CD4-positive, alpha-beta T cell (primary cell): ENCODE measurements at regions of chr20 and their contacts with region 1.

Region 1: GRCh38 chr20:17536944-17537444 is 5.8 kb upstream of the BFSP1 start:
- DNase-seq: peak; percentile 25 to 83 (median 52)
- ATAC-seq: peak; percentile 98
- H3K4me3 ChIP-seq: no peak overlapping the region
- H3K4me3 Mint-ChIP-seq: no peak overlapping the region
- H3K27ac ChIP-seq: no peak overlapping the region
- H3K27ac Mint-ChIP-seq: no peak overlapping the region
- H3K4me1 ChIP-seq: peaks cover 6% of the 10 kb centered on the region
- H3K4me1 Mint-ChIP-seq: no peaks in the 10 kb centered on the region
- H3K27me3 ChIP-seq: no peaks in the 10 kb centered on the region
- H3K27me3 Mint-ChIP-seq: peaks cover 35% of the 10 kb centered on the region
- CTCF ChIP-seq: peak; percentile 77

Region 2: GRCh38 chr20:17504898-17505635 is 31.9 kb before region 1 on chr20:
- CTCF ChIA-PET with region 1: interaction called, 18 read pairs
- POLR2A ChIA-PET with region 1: no interaction called
- intact Hi-C with region 1: loop called in 1 of 2 experiments (anchors 1 kb)
- DNase-seq: peak in 13 of 14 experiments; percentile 8 to 80 (median 25)
- ATAC-seq: peak; percentile 80
- H3K4me3 ChIP-seq: peak overlapping the region; percentile 69
- H3K4me3 Mint-ChIP-seq: peak overlapping the region; percentile 93
- H3K27ac ChIP-seq: peak overlapping the region; percentile 4 to 48
- H3K27ac Mint-ChIP-seq: peak overlapping the region; percentile 83
- H3K4me1 ChIP-seq: peaks cover 41% of the 10 kb centered on the region
- H3K4me1 Mint-ChIP-seq: peaks cover 32% of the 10 kb centered on the region
- H3K27me3 ChIP-seq: no peaks in the 10 kb centered on the region
- H3K27me3 Mint-ChIP-seq: no peaks in the 10 kb centered on the region
- CTCF ChIP-seq: peak; percentile 69

Region 3: GRCh38 chr20:17617551-17618223 is 80.7 kb after region 1 on chr20:
- CTCF ChIA-PET with region 1: interaction called, 9 read pairs
- POLR2A ChIA-PET with region 1: no interaction called
- intact Hi-C with region 1: loop called (anchors 1 kb)
- DNase-seq: peak in 11 of 14 experiments; percentile 27 to 66 (median 45)
- ATAC-seq: peak; percentile 55
- H3K4me3 ChIP-seq: no peak overlapping the region
- H3K4me3 Mint-ChIP-seq: no peak overlapping the region
- H3K27ac ChIP-seq: no peak overlapping the region
- H3K27ac Mint-ChIP-seq: no peak overlapping the region
- H3K4me1 ChIP-seq: peaks cover 11% of the 10 kb centered on the region
- H3K4me1 Mint-ChIP-seq: peaks cover 7% of the 10 kb centered on the region
- H3K27me3 ChIP-seq: no peaks in the 10 kb centered on the region
- H3K27me3 Mint-ChIP-seq: no peaks in the 10 kb centered on the region
- CTCF ChIP-seq: peak; percentile 70

Region 4: GRCh38 chr20:17898548-17898994 is 361.6 kb after region 1 on chr20:
- CTCF ChIA-PET with region 1: interaction called, 4 read pairs
- POLR2A ChIA-PET with region 1: no interaction called
- intact Hi-C with region 1: loop called (anchors 1 kb)
- DNase-seq: peak; percentile 39 to 80 (median 54)
- ATAC-seq: peak; percentile 89
- H3K4me3 ChIP-seq: no peak overlapping the region
- H3K4me3 Mint-ChIP-seq: no peak overlapping the region
- H3K27ac ChIP-seq: no peak overlapping the region
- H3K27ac Mint-ChIP-seq: no peak overlapping the region
- H3K4me1 ChIP-seq: peaks cover 10% of the 10 kb centered on the region
- H3K4me1 Mint-ChIP-seq: peaks cover 11% of the 10 kb centered on the region
- H3K27me3 ChIP-seq: peaks cover 0 to 10% of the 10 kb centered on the region in 2 experiments
- H3K27me3 Mint-ChIP-seq: peaks cover 27% of the 10 kb centered on the region
- CTCF ChIP-seq: peak; percentile 95

Region 5: DNA sequence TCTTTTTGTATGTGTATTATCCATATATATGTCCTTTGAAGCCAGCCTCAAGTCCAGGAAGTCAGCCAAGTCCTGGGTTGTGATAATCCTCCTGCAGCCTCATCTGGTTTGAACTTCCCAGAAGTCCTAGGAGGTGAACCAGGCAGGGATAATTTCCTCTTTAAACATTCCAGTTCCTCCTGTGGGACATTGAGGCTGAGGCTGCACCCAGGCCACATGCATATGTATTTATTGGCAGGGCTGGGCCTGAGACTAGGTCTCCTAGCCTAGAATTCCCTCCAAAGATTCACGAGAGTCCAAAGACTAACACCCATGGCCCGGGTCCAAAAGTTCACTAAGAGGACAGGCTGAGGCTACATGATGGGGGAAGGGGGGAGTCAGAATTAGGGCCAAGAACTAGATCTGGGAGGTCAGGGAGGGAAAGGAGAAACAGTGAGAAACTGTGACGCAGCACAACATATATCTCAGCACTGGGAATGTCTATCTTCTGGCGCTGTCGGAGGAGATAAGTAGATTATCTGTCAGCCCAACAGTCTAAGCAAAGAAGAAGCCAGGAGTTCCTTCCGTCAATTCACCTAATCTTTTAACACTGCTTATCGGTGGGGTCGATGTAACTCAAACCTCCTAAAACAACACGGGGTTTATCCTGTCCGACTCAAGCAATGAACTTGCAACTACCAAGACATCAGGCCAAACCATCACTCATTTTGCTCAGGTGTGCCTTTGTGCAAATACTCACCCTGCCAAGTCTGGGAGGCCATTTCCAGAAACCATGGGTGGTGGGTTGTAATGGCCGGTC is 388.3 kb after region 1 on chr20:
- CTCF ChIA-PET with region 1: no interaction called
- POLR2A ChIA-PET with region 1: no interaction called
- intact Hi-C with region 1: no loop called
- DNase-seq: no peak
- ATAC-seq: no peak
- H3K4me3 ChIP-seq: no peak overlapping the region
- H3K4me3 Mint-ChIP-seq: no peak overlapping the region
- H3K27ac ChIP-seq: no peak overlapping the region
- H3K27ac Mint-ChIP-seq: no peak overlapping the region
- H3K4me1 ChIP-seq: no peaks in the 10 kb centered on the region
- H3K4me1 Mint-ChIP-seq: no peaks in the 10 kb centered on the region
- H3K27me3 ChIP-seq: no peaks in the 10 kb centered on the region
- H3K27me3 Mint-ChIP-seq: peaks cover 10% of the 10 kb centered on the region
- CTCF ChIP-seq: no peak

Region 6: DNA sequence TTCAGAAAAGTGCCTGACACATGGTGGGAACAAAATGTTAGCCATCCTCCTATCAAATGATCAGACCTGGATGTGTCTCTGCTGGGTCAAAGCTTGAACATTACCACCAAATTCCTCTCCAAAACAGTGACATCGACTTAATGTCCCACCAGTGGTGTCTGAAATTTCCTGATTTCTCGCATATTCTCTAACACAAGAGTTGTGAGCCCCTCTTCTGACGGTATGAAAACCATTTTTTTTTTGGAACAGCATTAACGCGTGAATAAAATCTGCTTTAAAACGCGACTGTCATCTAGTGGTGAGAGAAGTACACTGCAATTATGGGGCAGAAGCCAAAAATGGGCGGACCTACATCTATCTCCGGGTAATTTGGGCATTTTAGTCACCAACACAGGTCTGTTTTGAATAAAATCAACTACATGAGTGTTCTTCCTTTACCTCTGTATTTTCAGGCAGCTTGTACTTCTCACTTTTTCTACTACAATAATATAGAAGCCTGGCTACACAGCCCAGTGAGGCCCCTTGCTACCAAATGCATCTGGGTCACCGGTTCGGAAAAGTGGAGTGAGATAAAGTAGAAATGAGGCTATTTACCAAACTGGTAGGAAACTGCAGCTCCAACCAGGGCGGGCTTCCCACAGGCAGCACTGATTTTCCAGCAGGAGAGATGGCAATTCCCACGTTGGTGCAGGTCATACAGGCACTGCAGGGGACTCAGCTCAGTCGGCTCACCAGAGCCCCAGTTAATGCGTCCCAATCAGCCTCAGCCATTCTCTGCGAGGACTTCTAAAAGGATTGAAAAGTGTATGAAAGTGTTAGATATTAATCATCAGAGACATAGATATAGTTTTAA is 459.2 kb after region 1 on chr20:
- CTCF ChIA-PET with region 1: no interaction called
- POLR2A ChIA-PET with region 1: no interaction called
- intact Hi-C with region 1: loop called (anchors 1 to 2 kb)
- DNase-seq: peak in 11 of 14 experiments; percentile 8 to 80 (median 22)
- ATAC-seq: peak; percentile 97
- H3K4me3 ChIP-seq: no peak overlapping the region
- H3K4me3 Mint-ChIP-seq: no peak overlapping the region
- H3K27ac ChIP-seq: no peak overlapping the region
- H3K27ac Mint-ChIP-seq: no peak overlapping the region
- H3K4me1 ChIP-seq: peaks cover 7% of the 10 kb centered on the region
- H3K4me1 Mint-ChIP-seq: peaks cover 22% of the 10 kb centered on the region
- H3K27me3 ChIP-seq: peaks cover 0 to 2% of the 10 kb centered on the region in 2 experiments
- H3K27me3 Mint-ChIP-seq: no peaks in the 10 kb centered on the region
- CTCF ChIP-seq: peak; percentile 88